ENCODE measurements at regions of chr5 and their contacts with region 1.

Region 1: GRCh38 chr5:61171479-61171878 is 9.2 kb upstream of the SMIM15 start:
- DNase-seq: no peak
- H3K4me3 ChIP-seq: no peak overlapping the region
- H3K27ac ChIP-seq: no peak overlapping the region
- H3K4me1 ChIP-seq: no peaks in the 10 kb centered on the region
- H3K27me3 ChIP-seq: no peaks in the 10 kb centered on the region
- CTCF ChIP-seq: no peak
- POLR2A ChIP-seq: no peak

Region 2: DNA sequence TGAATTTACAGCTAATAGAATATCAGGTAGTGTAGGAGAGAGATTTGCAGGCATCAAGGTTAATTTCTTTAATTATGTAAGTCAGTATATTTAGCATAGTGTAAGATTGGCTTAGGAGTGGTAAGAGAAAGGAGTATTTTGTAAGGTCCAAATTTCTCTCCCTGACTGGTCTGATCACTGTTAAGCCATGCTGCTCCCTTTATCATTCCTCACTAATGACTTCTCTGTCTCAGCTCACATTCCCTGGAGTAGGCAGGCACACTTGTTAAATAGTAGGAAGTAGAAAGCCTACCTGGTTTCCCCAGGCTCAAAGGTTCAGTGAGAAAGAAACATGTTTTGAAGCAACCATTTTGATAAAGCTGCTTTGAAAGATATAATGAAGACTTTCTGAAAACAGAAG is 100.0 kb before region 1 on chr5:
- intact Hi-C with region 1: no loop called
- DNase-seq: no peak
- H3K4me3 ChIP-seq: no peak overlapping the region
- H3K27ac ChIP-seq: no peak overlapping the region
- H3K4me1 ChIP-seq: no peaks in the 10 kb centered on the region
- H3K27me3 ChIP-seq: no peaks in the 10 kb centered on the region
- CTCF ChIP-seq: no peak
- POLR2A ChIP-seq: no peak

Region 3: DNA sequence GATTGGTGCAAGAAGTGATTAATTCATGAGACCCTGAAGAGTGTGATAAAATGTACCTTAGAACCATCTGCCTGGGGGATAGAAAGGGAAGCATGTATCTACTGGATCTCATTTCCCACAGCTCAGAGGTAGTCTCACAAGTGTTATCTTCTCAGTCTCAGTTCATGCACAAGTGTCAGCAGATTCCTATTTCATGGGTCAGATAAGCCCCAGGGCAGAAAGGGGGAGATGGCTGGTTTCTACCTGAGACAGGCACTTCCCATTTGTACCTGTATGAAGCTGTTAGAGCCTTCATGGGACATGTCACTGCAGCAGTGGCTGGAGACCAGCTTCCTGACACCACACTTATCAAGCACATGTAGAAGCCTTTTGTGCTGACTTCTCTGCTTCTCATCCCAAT is 36.4 kb after region 1 on chr5:
- intact Hi-C with region 1: loop called (anchors 2 kb)
- DNase-seq: no peak
- H3K4me3 ChIP-seq: no peak overlapping the region
- H3K27ac ChIP-seq: no peak overlapping the region
- H3K4me1 ChIP-seq: no peaks in the 10 kb centered on the region
- H3K27me3 ChIP-seq: no peaks in the 10 kb centered on the region
- CTCF ChIP-seq: no peak
- POLR2A ChIP-seq: no peak

Region 4: DNA sequence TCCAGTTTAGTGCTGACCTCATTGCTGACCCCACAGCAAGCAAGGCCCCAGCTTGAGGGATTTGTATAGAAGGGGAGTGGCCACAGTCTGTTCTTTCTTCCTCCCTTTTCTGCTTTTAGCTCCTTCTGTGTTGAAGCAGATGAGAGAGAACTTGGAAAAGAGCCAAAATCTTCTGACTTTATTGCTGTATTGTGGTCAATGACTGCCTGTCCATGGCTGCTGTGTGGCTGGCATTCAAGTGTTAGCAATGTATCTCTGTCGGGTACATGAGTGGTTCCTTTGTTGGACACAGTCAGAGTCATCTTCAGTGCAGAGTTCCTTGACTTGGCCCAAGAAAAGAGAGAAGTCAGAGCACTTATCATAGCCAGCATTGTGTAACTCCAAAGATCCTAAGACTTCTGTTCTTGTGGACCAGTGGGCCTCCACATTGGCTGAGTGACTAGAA is 1561.2 kb after region 1 on chr5:
- intact Hi-C with region 1: no loop called
- DNase-seq: no peak
- H3K4me3 ChIP-seq: no peak overlapping the region
- H3K27ac ChIP-seq: no peak overlapping the region
- H3K4me1 ChIP-seq: no peaks in the 10 kb centered on the region
- H3K27me3 ChIP-seq: no peaks in the 10 kb centered on the region
- CTCF ChIP-seq: no peak
- POLR2A ChIP-seq: no peak